ENCODE measurements at regions of chr7 and their contacts with region 1.

Region 1: DNA sequence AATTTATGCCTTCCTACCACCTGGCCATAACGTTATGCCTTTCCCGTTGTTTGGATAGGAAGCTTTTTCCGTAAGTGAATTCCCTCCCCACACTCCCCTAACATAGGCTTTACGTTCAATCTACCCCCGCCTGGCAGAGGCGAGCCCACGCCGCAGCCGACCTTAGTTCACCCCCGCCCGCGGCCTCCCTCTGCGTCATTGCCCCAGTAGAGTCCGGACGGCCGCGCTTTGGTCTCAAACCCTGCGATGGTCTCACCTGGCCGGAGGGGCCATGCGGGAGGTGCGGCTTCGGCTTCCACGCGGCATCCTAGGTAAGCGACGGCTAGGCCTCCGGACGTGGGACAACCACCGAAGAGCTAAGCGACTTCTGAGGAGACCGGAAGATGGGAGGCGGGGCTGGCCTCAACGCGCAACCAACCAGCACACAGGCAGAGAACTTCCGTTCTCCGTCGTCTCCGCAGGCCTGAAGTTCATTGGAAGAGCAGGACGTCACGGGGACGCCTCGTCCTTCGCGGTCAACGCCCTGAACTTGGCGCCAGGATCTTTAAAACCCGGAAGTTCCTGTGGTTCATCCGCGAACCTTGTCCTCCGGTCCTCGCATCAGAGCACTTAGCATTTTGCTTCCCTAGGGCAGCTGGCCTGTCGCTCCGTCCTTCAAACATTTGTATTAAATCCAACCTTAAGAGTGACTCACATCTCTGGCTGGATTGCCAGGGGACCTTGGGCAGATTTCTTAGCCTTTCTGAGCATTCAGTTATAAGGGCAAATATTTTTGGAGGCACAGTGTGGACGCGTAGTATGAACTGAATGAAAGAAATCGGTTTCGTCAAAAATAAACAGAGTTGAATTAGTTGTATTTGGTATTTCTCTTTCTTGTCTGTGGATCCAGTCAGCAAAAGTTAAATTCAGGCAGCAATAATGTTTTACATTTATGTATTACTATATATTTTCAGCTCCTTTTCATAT is at the start of gene CHCHD2:
- DNase-seq: peak; percentile 98
- H3K4me3 Mint-ChIP-seq: peak within 1 kb of the TSS; percentile 99
- H3K27ac Mint-ChIP-seq: peak within 1 kb of the TSS; percentile 99
- H3K4me1 Mint-ChIP-seq: no peaks in the 10 kb centered on the region
- H3K27me3 Mint-ChIP-seq: no peaks in the 10 kb centered on the region
- CTCF ChIP-seq: no peak
- total RNA-seq, gene CHCHD2: 564 and 712 TPM in 2 replicates

Region 2: GRCh38 chr7:56063882-56064625 is 42.3 kb before region 1 on chr7 and contains the start of gene SUMF2:
- CTCF ChIA-PET with region 1: no interaction called
- POLR2A ChIA-PET with region 1: interaction called, 18 read pairs
- intact Hi-C with region 1: no loop called
- DNase-seq: peak; percentile 90
- H3K4me3 Mint-ChIP-seq: peak within 1 kb of the TSS; percentile 82
- H3K27ac Mint-ChIP-seq: peak within 1 kb of the TSS; percentile 84
- H3K4me1 Mint-ChIP-seq: peaks cover 30% of the 10 kb centered on the region
- H3K27me3 Mint-ChIP-seq: no peaks in the 10 kb centered on the region
- CTCF ChIP-seq: no peak
- total RNA-seq, gene SUMF2: 142 and 159 TPM in 2 replicates

Measured in MCF 10A (cell line).